Endothelial cell of umbilical vein (primary cell): ENCODE measurements at regions of chr6 and their contacts with region 1.

Region 1: GRCh38 chr6:84645000-84645399 is 119.4 kb downstream of the TBX18 start:
- DNase-seq: peak; percentile 87
- H3K4me3 ChIP-seq: peak overlapping the region in 1 of 3 experiments; percentile 57
- H3K27ac ChIP-seq: peak overlapping the region; percentile 97
- H3K4me1 ChIP-seq: peaks cover 54% of the 10 kb centered on the region
- H3K27me3 ChIP-seq: no peaks in the 10 kb centered on the region
- CTCF ChIP-seq: no peak
- POLR2A ChIP-seq: no peak

Region 2: GRCh38 chr6:84361372-84362192 is 283.4 kb before region 1 on chr6:
- CTCF ChIA-PET with region 1: no interaction called
- POLR2A ChIA-PET with region 1: no interaction called
- dilution Hi-C with region 1: no loop called
- intact Hi-C with region 1: no loop called
- DNase-seq: peak; percentile 2
- H3K4me3 ChIP-seq: no peak overlapping the region
- H3K27ac ChIP-seq: no peak overlapping the region
- H3K4me1 ChIP-seq: no peaks in the 10 kb centered on the region
- H3K27me3 ChIP-seq: peaks cover 0 to 4% of the 10 kb centered on the region in 2 experiments
- CTCF ChIP-seq: no peak
- POLR2A ChIP-seq: no peak

Region 3: GRCh38 chr6:84618046-84618752 is 26.8 kb before region 1 on chr6:
- CTCF ChIA-PET with region 1: interaction called, 5 read pairs
- POLR2A ChIA-PET with region 1: no interaction called
- dilution Hi-C with region 1: no loop called
- intact Hi-C with region 1: loop called (anchors 1 kb)
- DNase-seq: peak; percentile 96
- H3K4me3 ChIP-seq: no peak overlapping the region
- H3K27ac ChIP-seq: peak overlapping the region; percentile 100
- H3K4me1 ChIP-seq: peaks cover 28% of the 10 kb centered on the region
- H3K27me3 ChIP-seq: no peaks in the 10 kb centered on the region
- CTCF ChIP-seq: no peak
- POLR2A ChIP-seq: no peak

Region 4: GRCh38 chr6:84625506-84625905 is 19.5 kb before region 1 on chr6:
- CTCF ChIA-PET with region 1: interaction called, 5 read pairs
- POLR2A ChIA-PET with region 1: no interaction called
- dilution Hi-C with region 1: no loop called
- intact Hi-C with region 1: loop called (anchors 1 kb)
- DNase-seq: no peak
- H3K4me3 ChIP-seq: no peak overlapping the region
- H3K27ac ChIP-seq: no peak overlapping the region
- H3K4me1 ChIP-seq: peaks cover 25% of the 10 kb centered on the region
- H3K27me3 ChIP-seq: no peaks in the 10 kb centered on the region
- CTCF ChIP-seq: no peak
- POLR2A ChIP-seq: no peak

Region 5: DNA sequence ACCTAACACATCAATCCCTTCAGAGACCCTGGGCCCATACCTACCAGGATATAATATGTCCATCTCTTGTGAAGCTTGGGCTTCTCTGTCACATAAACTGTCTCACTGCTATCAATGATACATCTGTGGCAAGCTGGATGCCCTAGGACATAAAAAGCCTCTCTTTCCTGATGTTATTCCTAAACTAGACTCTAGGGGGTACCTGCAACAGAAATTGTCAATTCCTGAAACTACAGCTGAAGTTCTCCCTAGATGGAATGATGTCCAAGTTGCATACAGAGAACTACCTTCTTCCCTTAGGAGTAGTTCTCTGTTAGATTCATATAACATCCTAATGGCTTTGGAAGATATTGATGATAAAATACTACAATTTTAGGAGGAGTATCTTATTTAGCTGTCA is 83.6 kb after region 1 on chr6:
- CTCF ChIA-PET with region 1: no interaction called
- POLR2A ChIA-PET with region 1: no interaction called
- dilution Hi-C with region 1: loop called (anchors 25 kb)
- intact Hi-C with region 1: no loop called
- DNase-seq: peak; percentile 39
- H3K4me3 ChIP-seq: no peak overlapping the region
- H3K27ac ChIP-seq: no peak overlapping the region
- H3K4me1 ChIP-seq: peaks cover 24% of the 10 kb centered on the region
- H3K27me3 ChIP-seq: no peaks in the 10 kb centered on the region
- CTCF ChIP-seq: peak; percentile 19 to 31
- POLR2A ChIP-seq: no peak